Activated CD4-positive, alpha-beta T cell treated with anti-CD3 and anti-CD28 coated beads, Interleukin-2, amount 10 ng/mL, durations not matched to agents 24 days and 14 days (primary cell): ENCODE measurements at regions of chr2 and their contacts with region 1.

Region 1: GRCh38 chr2:28392297-28393113 is at the start of gene FOSL2:
- DNase-seq: peak; percentile 98
- H3K4me3 Mint-ChIP-seq: no peak within 1 kb of the TSS
- H3K27ac Mint-ChIP-seq: peak within 1 kb of the TSS; percentile 99
- H3K4me1 Mint-ChIP-seq: peaks cover 38% of the 10 kb centered on the region
- H3K27me3 Mint-ChIP-seq: peaks cover 2% of the 10 kb centered on the region
- total RNA-seq, gene FOSL2: 73.2 and 80.6 TPM in 2 replicates

Region 2: GRCh38 chr2:27428213-27428977 is 964.1 kb before region 1 on chr2 and contains the start of gene NRBP1:
- intact Hi-C with region 1: loop called (anchors 2 kb)
- DNase-seq: peak; percentile 99
- H3K4me3 Mint-ChIP-seq: peak within 1 kb of the TSS; percentile 97
- H3K27ac Mint-ChIP-seq: peak within 1 kb of the TSS; percentile 99
- H3K4me1 Mint-ChIP-seq: peaks cover 28% of the 10 kb centered on the region
- H3K27me3 Mint-ChIP-seq: peaks cover 2% of the 10 kb centered on the region
- total RNA-seq, gene NRBP1: 93.9 and 94.7 TPM in 2 replicates

Region 3: DNA sequence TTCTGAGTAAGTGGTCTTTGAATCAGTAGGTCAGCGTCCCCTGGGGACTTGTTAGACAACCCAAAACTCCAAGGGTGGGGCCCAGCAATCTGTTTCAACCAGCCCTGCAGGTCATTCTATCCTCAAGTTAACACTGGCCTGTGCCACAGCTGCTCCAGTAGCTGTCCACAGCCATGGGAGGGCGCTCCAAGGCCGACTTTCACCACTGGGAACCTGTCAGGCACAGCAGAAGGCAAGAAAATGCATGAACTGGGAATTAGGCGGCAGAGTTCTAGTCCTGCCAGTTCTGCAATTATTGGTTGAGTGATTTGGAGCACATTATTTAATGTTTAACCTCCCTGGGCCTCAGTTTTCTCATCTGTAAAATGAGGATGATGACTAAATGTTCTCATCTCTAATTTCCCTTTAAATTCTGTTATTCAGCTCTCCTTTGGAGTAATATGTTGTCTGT is 638.3 kb before region 1 on chr2:
- intact Hi-C with region 1: loop called (anchors 1 kb)
- DNase-seq: peak; percentile 94
- H3K4me3 Mint-ChIP-seq: no peak overlapping the region
- H3K27ac Mint-ChIP-seq: peak overlapping the region; percentile 25
- H3K4me1 Mint-ChIP-seq: peaks cover 8% of the 10 kb centered on the region
- H3K27me3 Mint-ChIP-seq: peaks cover 3% of the 10 kb centered on the region

Region 4: DNA sequence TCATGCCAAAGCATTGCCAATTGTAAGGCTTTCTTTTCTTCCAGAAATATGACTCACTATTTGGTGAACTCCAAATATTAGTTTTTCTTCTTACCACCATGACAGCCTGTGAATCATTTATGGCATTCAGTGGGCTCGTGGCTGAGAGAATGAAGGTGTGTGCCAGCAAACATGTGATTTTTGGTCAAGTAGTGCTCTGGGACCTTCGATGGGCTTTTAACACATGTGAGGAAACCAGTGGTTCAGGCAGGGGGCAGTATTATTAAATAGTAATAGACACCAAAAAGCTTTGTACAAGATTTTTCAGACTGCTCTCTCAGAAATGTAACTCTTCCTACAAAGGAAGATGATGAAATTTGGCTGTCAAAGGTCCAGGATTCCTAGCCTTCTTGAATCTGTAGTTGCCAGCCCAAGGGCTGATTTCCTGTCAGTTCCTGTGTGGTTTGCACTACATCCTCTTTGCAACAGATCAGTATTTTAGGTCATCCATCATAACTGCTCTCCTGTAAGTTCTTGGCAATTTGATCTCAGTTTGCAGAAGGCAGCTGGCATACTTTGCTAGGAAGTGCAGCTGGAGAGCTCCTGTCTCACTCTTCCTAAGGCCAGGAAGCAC is 437.6 kb before region 1 on chr2:
- intact Hi-C with region 1: loop called (anchors 2 kb)
- DNase-seq: peak; percentile 76
- H3K4me3 Mint-ChIP-seq: peak overlapping the region; percentile 66
- H3K27ac Mint-ChIP-seq: peak overlapping the region; percentile 86
- H3K4me1 Mint-ChIP-seq: peaks cover 67% of the 10 kb centered on the region
- H3K27me3 Mint-ChIP-seq: no peaks in the 10 kb centered on the region

Region 5: DNA sequence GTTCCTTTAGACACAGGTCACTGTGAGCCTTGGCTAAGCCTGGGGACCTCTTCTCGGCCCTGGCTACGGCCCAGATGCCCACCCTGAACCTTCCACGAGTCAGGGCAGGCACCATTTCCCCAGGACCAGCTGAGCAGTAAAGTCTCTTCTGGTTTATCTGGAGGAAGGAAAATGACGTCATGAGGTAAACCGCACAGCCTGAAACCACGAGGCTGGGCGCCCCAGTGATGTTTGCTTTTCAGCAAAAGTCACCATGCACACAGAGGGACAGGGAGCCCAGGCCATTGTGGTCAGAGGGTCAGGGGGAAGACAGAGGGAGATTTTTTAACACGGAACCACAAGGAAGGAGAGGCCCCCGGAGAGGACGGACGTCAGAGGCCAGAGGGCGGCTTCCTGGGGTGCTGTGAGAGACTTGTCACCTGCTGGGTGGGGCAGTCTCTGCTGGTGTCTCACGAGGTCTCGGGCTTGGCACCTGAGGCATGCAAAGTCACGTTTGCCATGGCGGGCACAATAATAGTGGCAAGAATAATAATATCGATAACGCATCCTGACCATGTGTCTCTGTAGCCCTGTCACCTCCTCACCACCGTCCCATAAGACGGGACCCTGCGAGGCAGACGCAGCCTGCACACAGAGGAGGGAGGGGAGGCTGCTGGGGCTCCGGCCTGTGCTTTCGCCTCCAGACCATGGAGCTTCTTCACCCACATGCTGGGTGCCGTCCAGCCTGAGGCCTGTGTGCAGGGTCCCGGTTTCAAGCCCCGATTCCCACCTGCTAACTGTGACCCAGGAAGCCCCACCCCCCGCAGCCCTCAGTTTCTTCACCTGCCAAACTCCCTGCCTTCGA is 33.1 kb before region 1 on chr2:
- intact Hi-C with region 1: loop called (anchors 1 kb)
- DNase-seq: peak; percentile 96
- H3K4me3 Mint-ChIP-seq: peak overlapping the region; percentile 72
- H3K27ac Mint-ChIP-seq: peak overlapping the region; percentile 93
- H3K4me1 Mint-ChIP-seq: peaks cover 45% of the 10 kb centered on the region
- H3K27me3 Mint-ChIP-seq: peaks cover 5% of the 10 kb centered on the region

Region 6: DNA sequence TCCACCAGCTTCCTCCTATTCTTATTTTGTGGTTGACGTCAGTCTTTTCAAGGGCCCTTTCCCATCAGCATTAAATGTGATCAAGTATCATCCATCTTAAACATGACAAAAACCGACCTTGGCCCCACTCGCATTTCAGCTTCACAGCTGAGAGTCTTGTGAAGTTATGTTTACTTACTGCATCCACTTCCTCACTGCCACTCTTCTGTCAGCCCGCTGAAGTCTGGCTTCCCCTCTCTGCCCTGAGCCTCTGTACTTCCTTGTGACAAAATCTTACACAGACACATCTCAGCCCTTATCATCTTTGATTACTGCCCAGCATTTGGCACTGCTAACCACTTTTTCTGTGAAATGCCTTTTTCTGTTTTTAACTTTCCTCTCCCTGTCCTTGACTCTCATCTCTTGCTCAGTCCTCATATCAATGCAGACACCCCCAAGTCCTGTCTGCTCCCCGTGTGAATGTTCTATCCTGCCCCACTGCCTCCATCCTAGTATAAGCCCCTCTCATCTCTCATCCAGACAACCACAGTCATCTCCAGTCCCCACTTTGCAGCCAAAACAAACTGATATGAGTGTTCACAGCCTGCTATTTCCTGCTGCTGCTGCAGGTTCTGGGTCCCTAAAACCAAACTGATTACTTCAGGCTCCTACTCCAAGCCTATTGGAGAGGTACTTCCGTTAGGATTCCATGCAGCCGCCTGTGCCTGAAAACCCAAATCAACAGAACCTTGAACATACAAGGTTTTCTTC is 31.5 kb after region 1 on chr2:
- intact Hi-C with region 1: loop called (anchors 1 kb)
- DNase-seq: peak; percentile 81
- H3K4me3 Mint-ChIP-seq: peak overlapping the region; percentile 62
- H3K27ac Mint-ChIP-seq: peak overlapping the region; percentile 82
- H3K4me1 Mint-ChIP-seq: peaks cover 39% of the 10 kb centered on the region
- H3K27me3 Mint-ChIP-seq: no peaks in the 10 kb centered on the region

Region 7: GRCh38 chr2:28751252-28751955 is 358.9 kb after region 1 on chr2 and contains the start of gene PPP1CB:
- intact Hi-C with region 1: loop called (anchors 5 kb)
- DNase-seq: peak; percentile 99
- H3K4me3 Mint-ChIP-seq: peak within 1 kb of the TSS; percentile 98
- H3K27ac Mint-ChIP-seq: peak within 1 kb of the TSS; percentile 98
- H3K4me1 Mint-ChIP-seq: peaks cover 54% of the 10 kb centered on the region
- H3K27me3 Mint-ChIP-seq: no peaks in the 10 kb centered on the region
- total RNA-seq, gene PPP1CB: 246 and 251 TPM in 2 replicates